ENCODE measurements at regions of chr15 and their contacts with region 1.

Region 1: GRCh38 chr15:51322621-51323296 is 15.6 kb downstream of the CYP19A1 start:
- DNase-seq: no peak

Region 2: DNA sequence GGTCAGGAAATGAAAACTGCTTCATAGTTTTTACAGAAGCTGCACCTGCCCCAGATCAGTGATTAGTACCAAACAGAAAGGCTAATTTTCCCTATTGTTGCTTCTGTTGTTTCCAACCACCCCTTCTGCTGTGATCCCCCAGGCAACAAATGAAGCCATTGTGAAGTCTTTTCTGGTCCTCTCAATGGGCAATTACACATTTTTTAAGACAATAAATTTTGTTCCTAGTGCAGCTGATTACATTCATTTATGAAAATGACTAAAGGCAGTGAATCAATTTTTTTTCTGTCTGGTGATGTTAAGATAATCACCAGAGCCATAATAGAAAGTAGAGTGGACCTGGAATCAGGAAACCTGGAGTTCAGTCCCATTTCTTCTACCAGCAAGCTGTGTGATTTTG is 51.4 kb after region 1 on chr15:
- intact Hi-C with region 1: loop called (anchors 5 kb)
- DNase-seq: no peak